Posterior vena cava (tissue), 2 donors: ENCODE measurements at regions of chr2 and their contacts with region 1.

Region 1: GRCh38 chr2:183798535-183798934 is 674.3 kb downstream of the NUP35 start:
- DNase-seq: no peak

Region 2: GRCh38 chr2:184367216-184367615 is 568.7 kb after region 1 on chr2:
- intact Hi-C with region 1: loop called in 1 of 2 experiments (anchors 5 kb)
- DNase-seq: no peak